HEK293 (cell line): ENCODE measurements at regions of chr10 and their contacts with region 1.

Region 1: DNA sequence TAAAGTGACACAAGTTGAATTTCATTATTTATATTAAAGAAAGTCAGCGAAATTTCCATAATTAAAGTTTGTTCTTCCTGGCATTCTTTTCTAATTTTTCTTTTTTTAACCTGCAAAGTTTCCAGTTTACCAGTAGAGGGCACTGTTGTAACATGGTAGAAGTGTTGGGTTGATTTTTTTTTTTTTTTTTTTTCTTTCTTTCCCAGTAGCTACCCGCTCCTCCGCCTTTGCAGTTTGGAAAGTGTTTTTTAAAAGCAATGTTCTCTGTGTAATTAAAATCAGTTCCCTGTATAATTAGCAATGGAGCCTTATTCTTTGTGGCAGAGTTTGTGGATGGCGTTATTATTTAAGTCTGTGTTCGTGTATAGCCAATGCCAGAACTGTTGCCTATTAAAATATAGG is 53.7 kb downstream of the TAF3 start:
- H3K4me3 ChIP-seq: peak overlapping the region; percentile 33
- H3K27ac ChIP-seq: no peak overlapping the region
- H3K4me1 ChIP-seq: peaks cover 23% of the 10 kb centered on the region
- CTCF ChIP-seq: no peak; the same call in 1 of the 2 replicates

Region 2: DNA sequence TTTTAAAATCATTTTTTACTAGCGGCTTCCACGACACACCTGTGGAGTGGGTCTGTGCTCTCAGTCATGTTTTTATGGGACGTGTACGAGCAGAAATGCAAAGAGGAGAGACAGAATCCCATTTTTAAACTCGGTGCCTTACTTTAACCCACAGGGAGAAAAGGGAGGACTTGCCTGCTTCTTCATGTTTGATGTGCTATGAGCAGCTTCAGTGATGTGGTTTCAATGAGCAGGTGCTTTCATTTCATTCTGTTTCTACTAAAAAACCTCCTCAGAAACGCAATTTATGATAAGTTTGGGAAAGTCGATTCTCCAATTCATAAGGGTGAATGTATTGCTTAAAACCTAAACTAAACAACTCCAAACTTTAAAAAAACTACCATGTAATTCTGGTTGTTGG is 719.6 kb after region 1 on chr10:
- CTCF ChIA-PET with region 1: interaction called, 10 read pairs
- POLR2A ChIA-PET with region 1: no interaction called
- H3K4me3 ChIP-seq: no peak overlapping the region
- H3K27ac ChIP-seq: no peak overlapping the region
- H3K4me1 ChIP-seq: no peaks in the 10 kb centered on the region
- CTCF ChIP-seq: no peak